ENCODE measurements at regions of chr12 and their contacts with region 1.

Region 1: GRCh38 chr12:117236456-117237001 is 46.3 kb upstream of the FBXO21 start:
- DNase-seq: peak; percentile 75
- H3K4me3 Mint-ChIP-seq: no peak overlapping the region
- H3K27ac Mint-ChIP-seq: no peak overlapping the region
- H3K4me1 Mint-ChIP-seq: no peaks in the 10 kb centered on the region
- H3K27me3 Mint-ChIP-seq: no peaks in the 10 kb centered on the region
- CTCF ChIP-seq: peak; percentile 73

Region 2: DNA sequence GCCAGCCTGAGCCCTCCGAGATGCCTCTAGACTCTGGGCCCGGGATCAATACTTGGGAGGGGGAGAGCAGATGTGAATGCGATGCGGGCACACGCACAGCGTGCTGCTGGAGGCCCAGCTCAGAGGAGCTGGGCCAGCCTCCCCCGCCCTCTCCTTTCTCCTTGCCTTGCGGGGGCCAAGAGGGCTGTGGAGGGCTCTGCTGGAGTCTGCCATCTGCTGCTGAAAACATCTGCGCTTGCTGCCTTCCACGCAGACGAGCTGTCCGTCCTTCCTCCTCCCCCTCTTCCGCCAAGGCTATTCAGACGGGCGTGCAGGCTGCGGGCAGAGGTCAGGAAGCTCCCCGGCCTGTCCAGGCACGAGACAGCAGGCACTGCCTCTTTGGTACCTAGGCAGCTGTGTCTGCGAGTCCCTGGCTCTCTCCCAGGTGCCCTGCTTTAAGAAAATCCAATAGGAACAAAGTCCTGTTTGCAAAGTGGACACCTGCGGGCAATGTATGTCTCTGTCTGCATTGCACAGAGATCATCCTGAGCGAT is 573.9 kb before region 1 on chr12:
- CTCF ChIA-PET with region 1: no interaction called
- POLR2A ChIA-PET with region 1: no interaction called
- intact Hi-C with region 1: no loop called
- DNase-seq: no peak
- H3K4me3 Mint-ChIP-seq: no peak overlapping the region
- H3K27ac Mint-ChIP-seq: no peak overlapping the region
- H3K4me1 Mint-ChIP-seq: peaks cover 17% of the 10 kb centered on the region
- H3K27me3 Mint-ChIP-seq: peaks cover 17% of the 10 kb centered on the region
- CTCF ChIP-seq: no peak

Region 3: GRCh38 chr12:117255386-117255785 is 18.9 kb after region 1 on chr12:
- CTCF ChIA-PET with region 1: interaction called, 23 read pairs
- POLR2A ChIA-PET with region 1: no interaction called
- intact Hi-C with region 1: no loop called
- DNase-seq: no peak
- H3K4me3 Mint-ChIP-seq: no peak overlapping the region
- H3K27ac Mint-ChIP-seq: no peak overlapping the region
- H3K4me1 Mint-ChIP-seq: no peaks in the 10 kb centered on the region
- H3K27me3 Mint-ChIP-seq: no peaks in the 10 kb centered on the region
- CTCF ChIP-seq: no peak

Region 4: GRCh38 chr12:117587631-117588287 is 351.2 kb after region 1 on chr12:
- CTCF ChIA-PET with region 1: interaction called, 39 read pairs
- POLR2A ChIA-PET with region 1: no interaction called
- intact Hi-C with region 1: loop called (anchors 5 kb)
- DNase-seq: peak; percentile 65
- H3K4me3 Mint-ChIP-seq: no peak overlapping the region
- H3K27ac Mint-ChIP-seq: no peak overlapping the region
- H3K4me1 Mint-ChIP-seq: no peaks in the 10 kb centered on the region
- H3K27me3 Mint-ChIP-seq: peaks cover 21% of the 10 kb centered on the region
- CTCF ChIP-seq: peak; percentile 78

Region 5: GRCh38 chr12:117850048-117850447 is 613.5 kb after region 1 on chr12:
- CTCF ChIA-PET with region 1: interaction called, 30 read pairs
- POLR2A ChIA-PET with region 1: no interaction called
- intact Hi-C with region 1: loop called (anchors 2 kb)
- DNase-seq: peak; percentile 77
- H3K4me3 Mint-ChIP-seq: no peak overlapping the region
- H3K27ac Mint-ChIP-seq: no peak overlapping the region
- H3K4me1 Mint-ChIP-seq: peaks cover 4% of the 10 kb centered on the region
- H3K27me3 Mint-ChIP-seq: peaks cover 44% of the 10 kb centered on the region
- CTCF ChIP-seq: peak; percentile 77